GM12878 (cell line): ENCODE measurements at regions of chr6 and their contacts with region 1.

Region 1: DNA sequence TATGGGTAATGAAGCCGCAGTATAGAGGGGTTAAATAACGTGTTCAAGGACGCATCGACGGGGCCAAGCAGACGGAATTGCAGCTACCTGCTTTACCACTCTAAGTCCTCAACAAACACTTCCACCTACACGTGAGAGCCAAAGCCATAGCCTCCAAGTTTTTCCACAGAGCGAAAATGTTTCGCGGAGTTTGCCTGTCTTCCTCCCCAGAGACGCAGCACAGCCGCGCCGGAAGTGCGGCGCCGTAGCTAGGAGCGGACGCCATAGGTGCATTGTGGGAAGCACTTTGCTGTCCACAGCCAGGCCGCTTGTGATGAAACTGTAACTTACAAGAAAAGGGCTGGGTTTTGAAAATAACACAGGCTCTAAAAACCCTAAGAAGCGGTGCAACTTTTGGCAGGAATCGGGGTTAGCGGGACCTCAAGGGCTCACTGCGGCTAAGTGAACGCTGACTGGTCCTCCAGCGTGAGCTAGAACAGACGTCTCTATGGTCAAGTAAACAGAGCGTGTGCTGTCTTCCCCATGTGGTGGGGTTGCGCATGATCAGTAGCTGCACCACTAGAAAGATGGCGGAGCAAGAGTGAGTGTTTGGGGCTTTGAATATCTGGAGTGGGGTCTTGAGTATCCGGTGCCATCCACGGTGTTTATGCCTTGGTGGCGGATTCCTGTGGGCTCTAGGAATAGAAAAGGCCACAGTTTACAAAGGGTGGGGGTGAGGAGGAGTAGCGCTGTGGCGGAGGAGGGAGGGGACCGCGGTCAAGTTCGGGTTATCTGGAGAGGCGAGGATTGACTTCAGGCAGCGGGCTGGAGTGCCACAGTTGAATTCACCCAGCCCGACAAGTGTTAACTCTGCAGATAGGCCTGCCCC is at the start of gene RPL7L1:
- DNase-seq: peak; percentile 80
- ATAC-seq: peak; percentile 96
- H3K4me3 ChIP-seq: peak within 1 kb of the TSS; percentile 86
- H3K27ac ChIP-seq: peak within 1 kb of the TSS; percentile 78
- H3K4me1 ChIP-seq: no peaks in the 10 kb centered on the region
- H3K27me3 ChIP-seq: no peaks in the 10 kb centered on the region
- CTCF ChIP-seq: 0 out of 6 replicates have a peak, but pooled peaks of 1 of the 3 experiments have one; percentile 2
- EP300 ChIP-seq: no peak
- POLR2A ChIP-seq: peak; percentile 92
- RAD21 ChIP-seq: no peak
- polyA plus RNA-seq, gene RPL7L1: 98.2 to 119 TPM

Region 2: GRCh38 chr6:42099340-42100028 is 780.1 kb before region 1 on chr6:
- CTCF ChIA-PET with region 1: no interaction called
- POLR2A ChIA-PET with region 1: no interaction called
- RAD21 ChIA-PET with region 1: no interaction called
- SMC1A ChIA-PET with region 1: no interaction called
- in situ Hi-C with region 1: no loop called
- intact Hi-C with region 1: no loop called
- DNase-seq: no peak
- ATAC-seq: no peak
- H3K4me3 ChIP-seq: no peak overlapping the region
- H3K27ac ChIP-seq: no peak overlapping the region
- H3K4me1 ChIP-seq: no peaks in the 10 kb centered on the region
- H3K27me3 ChIP-seq: no peaks in the 10 kb centered on the region; a peak in 1 of 4 replicates
- CTCF ChIP-seq: no peak
- EP300 ChIP-seq: no peak
- POLR2A ChIP-seq: no peak
- RAD21 ChIP-seq: no peak

Region 3: GRCh38 chr6:42383421-42384205 is 496.0 kb before region 1 on chr6:
- CTCF ChIA-PET with region 1: no interaction called
- POLR2A ChIA-PET with region 1: no interaction called
- RAD21 ChIA-PET with region 1: no interaction called
- SMC1A ChIA-PET with region 1: no interaction called
- in situ Hi-C with region 1: no loop called
- intact Hi-C with region 1: no loop called
- DNase-seq: no peak
- ATAC-seq: peak; percentile 48
- H3K4me3 ChIP-seq: no peak overlapping the region
- H3K27ac ChIP-seq: no peak overlapping the region
- H3K4me1 ChIP-seq: peaks cover 35% of the 10 kb centered on the region
- H3K27me3 ChIP-seq: no peaks in the 10 kb centered on the region
- CTCF ChIP-seq: no peak
- EP300 ChIP-seq: no peak
- POLR2A ChIP-seq: no peak
- RAD21 ChIP-seq: no peak

Region 4: DNA sequence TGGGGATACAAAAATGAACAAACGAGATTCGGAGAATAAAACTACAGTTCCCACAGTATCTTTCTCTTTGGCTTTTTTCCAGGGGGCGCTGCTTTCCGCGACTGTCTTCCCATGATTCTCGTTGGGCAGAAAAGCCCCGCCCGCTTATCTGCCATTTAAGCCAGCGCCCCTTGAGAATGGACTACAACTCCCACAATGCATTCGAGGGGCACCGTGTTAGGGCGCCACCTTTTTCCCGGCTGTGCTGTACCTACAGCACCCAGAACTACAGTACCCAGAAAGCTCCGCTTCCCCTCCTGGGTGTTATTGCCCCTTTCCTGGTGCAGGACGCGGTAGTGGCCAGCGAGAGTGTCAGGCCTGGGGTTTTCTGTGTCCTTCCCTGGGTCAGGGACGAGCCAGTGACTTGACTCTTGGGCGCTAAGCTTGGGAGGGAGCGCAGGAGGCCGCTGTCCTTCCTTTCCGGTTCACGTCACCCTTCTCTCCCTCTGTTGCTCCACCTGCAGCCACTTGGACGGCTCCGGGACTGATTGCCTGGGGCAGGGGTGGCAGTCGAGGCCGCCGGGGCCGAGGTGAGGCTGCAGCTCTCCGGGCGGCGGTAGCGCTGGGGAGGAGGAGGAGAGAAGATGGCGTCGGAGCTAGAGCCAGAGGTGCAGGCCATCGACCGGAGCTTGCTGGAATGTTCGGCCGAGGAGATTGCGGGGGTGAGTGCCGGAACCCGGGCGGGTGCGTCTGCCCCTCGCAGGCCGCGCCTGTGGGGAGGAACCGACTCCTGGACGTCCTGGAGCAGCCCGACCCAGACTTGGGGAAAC is 315.7 kb before region 1 on chr6 and contains the start of gene UBR2:
- CTCF ChIA-PET with region 1: no interaction called
- POLR2A ChIA-PET with region 1: interaction called, 3 read pairs
- RAD21 ChIA-PET with region 1: interaction called, 10 read pairs
- SMC1A ChIA-PET with region 1: interaction called, 3 read pairs
- in situ Hi-C with region 1: no loop called
- intact Hi-C with region 1: no loop called
- DNase-seq: peak; percentile 91
- ATAC-seq: peak; percentile 96
- H3K4me3 ChIP-seq: peak within 1 kb of the TSS; percentile 90
- H3K27ac ChIP-seq: peak within 1 kb of the TSS; percentile 93
- H3K4me1 ChIP-seq: no peaks in the 10 kb centered on the region; the same call in 1 of the 2 replicates
- H3K27me3 ChIP-seq: no peaks in the 10 kb centered on the region
- CTCF ChIP-seq: peak; percentile 32 to 40 (median 39); a peak in 5 of 6 replicates
- EP300 ChIP-seq: no peak
- POLR2A ChIP-seq: peak; percentile 97
- RAD21 ChIP-seq: no peak
- polyA plus RNA-seq, gene UBR2: 2.3 to 5.9 TPM

Region 5: GRCh38 chr6:42661540-42662153 is 218.0 kb before region 1 on chr6:
- CTCF ChIA-PET with region 1: interaction called, 87 read pairs
- POLR2A ChIA-PET with region 1: no interaction called
- RAD21 ChIA-PET with region 1: interaction called, 26 read pairs
- SMC1A ChIA-PET with region 1: interaction called, 58 read pairs
- in situ Hi-C with region 1: loop called (anchors 5 kb)
- intact Hi-C with region 1: loop called (anchors 1 kb)
- DNase-seq: peak; percentile 16
- ATAC-seq: peak; percentile 94
- H3K4me3 ChIP-seq: no peak overlapping the region
- H3K27ac ChIP-seq: no peak overlapping the region
- H3K4me1 ChIP-seq: no peaks in the 10 kb centered on the region
- H3K27me3 ChIP-seq: no peaks in the 10 kb centered on the region
- CTCF ChIP-seq: peak; percentile 74 to 91 (median 86)
- EP300 ChIP-seq: no peak
- POLR2A ChIP-seq: no peak
- RAD21 ChIP-seq: peak; percentile 93

Region 6: DNA sequence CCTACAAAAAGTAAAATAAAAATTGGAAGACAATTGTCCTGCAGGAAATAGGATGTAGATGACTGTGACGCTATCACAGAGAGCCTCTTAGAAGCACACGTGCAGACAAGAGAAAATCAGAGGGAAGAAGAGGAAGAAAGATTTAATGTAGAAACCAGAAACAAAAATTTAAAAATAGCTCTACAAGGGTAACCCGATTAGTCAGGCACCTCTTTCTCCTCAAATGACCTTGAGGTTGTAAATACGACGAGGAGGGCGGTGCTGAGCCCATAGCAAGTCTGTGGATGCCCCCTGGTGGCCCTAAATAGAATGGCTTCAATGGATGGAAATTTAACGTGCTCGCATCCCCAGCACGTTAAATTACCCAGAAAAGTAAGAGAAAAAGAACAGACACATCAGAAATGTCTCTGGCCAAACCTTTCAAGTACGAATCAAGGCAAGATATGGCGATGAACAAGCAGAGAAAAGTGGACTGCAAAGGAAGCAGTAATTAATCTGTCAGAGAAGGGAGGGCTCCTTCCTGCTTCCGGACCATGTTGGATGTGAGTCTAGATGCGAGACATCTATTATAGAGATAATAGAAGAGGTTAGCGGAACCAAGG is 153.0 kb before region 1 on chr6:
- CTCF ChIA-PET with region 1: interaction called, 17 read pairs
- POLR2A ChIA-PET with region 1: interaction called, 3 read pairs
- RAD21 ChIA-PET with region 1: interaction called, 3 read pairs
- SMC1A ChIA-PET with region 1: interaction called, 12 read pairs
- in situ Hi-C with region 1: loop called (anchors 5 kb)
- intact Hi-C with region 1: loop called (anchors 1 kb)
- DNase-seq: peak; percentile 66
- ATAC-seq: peak; percentile 96
- H3K4me3 ChIP-seq: peak overlapping the region; percentile 58; the same call in 1 of the 2 replicates
- H3K27ac ChIP-seq: peak overlapping the region; percentile 60
- H3K4me1 ChIP-seq: peaks cover 10% of the 10 kb centered on the region; the same call in 1 of the 2 replicates
- H3K27me3 ChIP-seq: no peaks in the 10 kb centered on the region
- CTCF ChIP-seq: peak; percentile 76 to 97 (median 89)
- EP300 ChIP-seq: no peak
- POLR2A ChIP-seq: no peak
- RAD21 ChIP-seq: peak; percentile 92

Region 7: GRCh38 chr6:42790549-42791181 is 88.9 kb before region 1 on chr6:
- CTCF ChIA-PET with region 1: interaction called, 5 read pairs
- POLR2A ChIA-PET with region 1: interaction called, 11 read pairs
- RAD21 ChIA-PET with region 1: interaction called, 3 read pairs
- SMC1A ChIA-PET with region 1: interaction called, 3 read pairs
- in situ Hi-C with region 1: no loop called
- intact Hi-C with region 1: no loop called
- DNase-seq: no peak
- ATAC-seq: peak; percentile 35
- H3K4me3 ChIP-seq: no peak overlapping the region
- H3K27ac ChIP-seq: peak overlapping the region; percentile 9
- H3K4me1 ChIP-seq: peaks cover 27% of the 10 kb centered on the region
- H3K27me3 ChIP-seq: no peaks in the 10 kb centered on the region
- CTCF ChIP-seq: no peak; a peak in 1 of 6 replicates
- EP300 ChIP-seq: no peak
- POLR2A ChIP-seq: no peak
- RAD21 ChIP-seq: no peak

Region 8: DNA sequence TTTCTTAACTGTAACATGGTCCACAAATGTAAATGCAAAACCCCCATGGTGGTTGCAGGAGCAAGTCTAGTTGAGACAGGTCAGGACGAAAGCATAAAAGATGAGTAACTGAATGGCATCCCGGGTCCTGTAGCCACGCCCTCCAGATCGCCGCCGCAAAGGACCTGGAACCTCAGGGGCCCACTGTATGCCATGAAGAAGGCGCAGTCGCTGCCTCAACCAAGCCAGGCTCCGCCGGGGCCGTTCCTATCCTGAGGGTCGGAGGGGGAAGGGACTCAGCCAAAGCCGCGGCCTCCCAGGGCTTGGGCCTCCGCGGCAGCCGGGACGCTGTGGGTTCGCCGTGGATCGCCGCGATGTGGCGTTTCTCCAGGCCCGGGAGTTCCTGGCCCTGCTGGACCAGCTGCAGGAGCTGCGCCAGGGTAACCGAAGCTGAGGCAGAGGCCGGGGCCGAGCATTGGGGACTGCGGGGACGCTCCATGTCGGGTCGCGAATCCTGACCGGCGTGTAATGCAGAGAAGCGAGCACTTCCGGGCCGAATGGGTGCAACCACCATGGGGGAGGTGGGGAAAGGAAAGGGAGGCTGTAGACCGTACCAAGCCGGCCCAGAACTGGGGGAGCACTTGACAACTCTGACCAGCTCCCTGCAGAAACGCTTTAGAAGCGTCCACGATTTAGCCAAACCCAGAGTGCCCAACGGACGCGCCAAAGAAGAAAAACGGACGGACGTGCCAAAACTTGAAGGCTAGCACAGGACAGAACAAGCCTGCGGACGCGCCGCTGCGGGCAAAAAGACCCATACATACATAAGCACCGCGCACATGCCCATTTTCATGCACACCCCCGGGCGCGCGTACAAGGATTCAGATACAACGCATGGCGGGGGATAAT is 10.9 kb after region 1 on chr6:
- CTCF ChIA-PET with region 1: interaction called, 8 read pairs
- POLR2A ChIA-PET with region 1: interaction called, 16 read pairs
- RAD21 ChIA-PET with region 1: interaction called, 9 read pairs
- SMC1A ChIA-PET with region 1: interaction called, 9 read pairs
- in situ Hi-C with region 1: no loop called
- intact Hi-C with region 1: no loop called
- DNase-seq: peak; percentile 89
- ATAC-seq: peak; percentile 95
- H3K4me3 ChIP-seq: peak overlapping the region; percentile 85
- H3K27ac ChIP-seq: peak overlapping the region; percentile 88
- H3K4me1 ChIP-seq: peaks cover 15% of the 10 kb centered on the region
- H3K27me3 ChIP-seq: no peaks in the 10 kb centered on the region
- CTCF ChIP-seq: no peak
- EP300 ChIP-seq: peak in 1 of 2 experiments; percentile 27; a peak in 1 of 4 replicates
- POLR2A ChIP-seq: peak; percentile 98
- RAD21 ChIP-seq: no peak